IMR-90 (cell line): ENCODE measurements at regions of chr1 and their contacts with region 1.

Region 1: GRCh38 chr1:64933296-64934070 is 32.9 kb downstream of the JAK1 start:
- DNase-seq: peak; percentile 96
- ATAC-seq: peak; percentile 82
- H3K4me3 ChIP-seq: peak overlapping the region; percentile 17; the same call in 1 of the 2 replicates
- H3K27ac ChIP-seq: peak overlapping the region; percentile 80
- H3K4me1 ChIP-seq: peaks cover 15% of the 10 kb centered on the region
- H3K27me3 ChIP-seq: no peaks in the 10 kb centered on the region
- CTCF ChIP-seq: no peak
- POLR2A ChIP-seq: peak; percentile 33
- RAD21 ChIP-seq: no peak

Region 2: GRCh38 chr1:64882574-64883255 is 50.8 kb before region 1 on chr1:
- CTCF ChIA-PET with region 1: no interaction called
- POLR2A ChIA-PET with region 1: no interaction called
- dilution Hi-C with region 1: no loop called
- in situ Hi-C with region 1: no loop called
- intact Hi-C with region 1: loop called (anchors 5 kb)
- DNase-seq: no peak
- ATAC-seq: no peak
- H3K4me3 ChIP-seq: no peak overlapping the region
- H3K27ac ChIP-seq: no peak overlapping the region
- H3K4me1 ChIP-seq: peaks cover 3% of the 10 kb centered on the region
- H3K27me3 ChIP-seq: no peaks in the 10 kb centered on the region
- CTCF ChIP-seq: no peak
- POLR2A ChIP-seq: no peak
- RAD21 ChIP-seq: no peak

Region 3: DNA sequence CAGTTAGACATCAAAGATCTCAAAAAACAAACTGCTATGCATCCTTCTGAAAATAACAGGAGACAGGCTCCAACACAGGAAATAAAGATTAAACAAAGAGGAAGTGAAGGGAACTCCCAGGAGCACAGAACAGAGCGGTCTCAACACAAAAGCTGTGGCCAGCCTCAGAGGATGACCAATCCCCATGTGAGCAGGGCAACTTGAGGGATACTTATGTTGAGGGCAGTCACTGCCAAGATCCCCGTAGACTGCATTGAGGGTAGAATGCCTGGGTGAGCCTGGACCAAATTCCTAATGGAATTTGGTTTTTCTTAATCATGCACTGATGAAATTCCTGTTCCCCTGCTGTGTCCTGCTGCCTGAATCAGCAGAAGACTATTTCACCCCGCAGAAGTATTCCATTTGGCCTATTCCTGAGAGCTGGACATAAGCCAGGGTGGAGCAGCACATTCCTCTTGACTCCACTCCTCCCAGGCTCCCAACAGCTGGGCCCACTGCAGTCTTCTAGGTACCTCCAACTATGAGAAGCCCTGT is 16.1 kb before region 1 on chr1:
- CTCF ChIA-PET with region 1: interaction called, 3 read pairs
- POLR2A ChIA-PET with region 1: no interaction called
- dilution Hi-C with region 1: no loop called
- in situ Hi-C with region 1: no loop called
- intact Hi-C with region 1: loop called (anchors 2 kb)
- DNase-seq: peak; percentile 99
- ATAC-seq: peak; percentile 85
- H3K4me3 ChIP-seq: no peak overlapping the region
- H3K27ac ChIP-seq: peak overlapping the region; percentile 93
- H3K4me1 ChIP-seq: peaks cover 19% of the 10 kb centered on the region
- H3K27me3 ChIP-seq: no peaks in the 10 kb centered on the region
- CTCF ChIP-seq: no peak
- POLR2A ChIP-seq: peak; percentile 65
- RAD21 ChIP-seq: peak; percentile 14; the same call in 1 of the 2 replicates

Region 4: DNA sequence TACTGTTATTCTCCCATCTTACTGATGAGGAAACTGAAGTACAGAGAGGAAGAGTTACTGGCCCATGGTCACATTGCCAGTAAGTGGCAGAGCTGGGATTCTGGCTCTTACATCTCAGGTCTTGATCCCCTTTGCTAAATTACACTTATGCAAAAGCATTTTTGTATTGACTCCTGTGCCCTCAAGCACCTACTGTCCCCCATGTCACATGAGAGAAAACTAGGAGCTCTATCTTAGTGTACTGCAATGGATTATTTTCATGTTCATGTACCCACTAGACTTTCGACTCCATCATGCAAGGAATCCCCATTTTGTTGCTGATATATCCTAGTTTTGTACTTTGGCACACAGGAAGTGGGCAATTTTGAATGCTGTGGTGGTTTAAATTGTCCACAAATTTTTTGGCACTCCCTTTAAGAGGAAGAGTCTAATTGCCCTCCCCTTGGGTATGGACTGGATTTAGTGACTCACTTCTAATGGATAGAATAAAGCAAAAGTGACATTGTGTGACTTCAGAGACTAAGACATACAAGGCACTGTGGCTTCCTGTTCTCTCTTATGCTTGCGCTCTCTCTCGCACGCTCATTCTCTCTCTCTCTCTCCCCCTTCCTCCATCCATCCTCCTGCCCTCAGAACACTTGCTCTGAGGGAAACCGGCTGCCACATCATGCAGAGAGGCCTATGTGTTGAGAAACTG is 76.4 kb after region 1 on chr1:
- CTCF ChIA-PET with region 1: no interaction called
- POLR2A ChIA-PET with region 1: no interaction called
- dilution Hi-C with region 1: no loop called
- in situ Hi-C with region 1: no loop called
- intact Hi-C with region 1: no loop called
- DNase-seq: no peak
- ATAC-seq: no peak
- H3K4me3 ChIP-seq: no peak overlapping the region
- H3K27ac ChIP-seq: no peak overlapping the region
- H3K4me1 ChIP-seq: no peaks in the 10 kb centered on the region
- H3K27me3 ChIP-seq: no peaks in the 10 kb centered on the region
- CTCF ChIP-seq: no peak
- POLR2A ChIP-seq: no peak
- RAD21 ChIP-seq: no peak